ENCODE measurements at regions of chr7 and their contacts with region 1.

Region 1: GRCh38 chr7:130242198-130243014 is 24.3 kb upstream of the CPA2 start:
- H3K4me3 Mint-ChIP-seq: no peak overlapping the region
- H3K27ac Mint-ChIP-seq: no peak overlapping the region
- H3K4me1 Mint-ChIP-seq: peaks cover 13% of the 10 kb centered on the region
- H3K27me3 Mint-ChIP-seq: no peaks in the 10 kb centered on the region

Region 2: GRCh38 chr7:130263130-130263529 is 20.7 kb after region 1 on chr7:
- intact Hi-C with region 1: no loop called
- H3K4me3 Mint-ChIP-seq: no peak overlapping the region
- H3K27ac Mint-ChIP-seq: no peak overlapping the region
- H3K4me1 Mint-ChIP-seq: no peaks in the 10 kb centered on the region
- H3K27me3 Mint-ChIP-seq: peaks cover 1% of the 10 kb centered on the region

Region 3: GRCh38 chr7:130486114-130486958 is 243.9 kb after region 1 on chr7:
- intact Hi-C with region 1: loop called (anchors 5 kb)
- H3K4me3 Mint-ChIP-seq: peak overlapping the region; percentile 81
- H3K27ac Mint-ChIP-seq: peak overlapping the region; percentile 67
- H3K4me1 Mint-ChIP-seq: peaks cover 46% of the 10 kb centered on the region
- H3K27me3 Mint-ChIP-seq: peaks cover 55% of the 10 kb centered on the region

Region 4: GRCh38 chr7:130560970-130561369 is 318.6 kb after region 1 on chr7:
- intact Hi-C with region 1: loop called (anchors 5 kb)
- H3K4me3 Mint-ChIP-seq: no peak overlapping the region
- H3K27ac Mint-ChIP-seq: no peak overlapping the region
- H3K4me1 Mint-ChIP-seq: no peaks in the 10 kb centered on the region
- H3K27me3 Mint-ChIP-seq: no peaks in the 10 kb centered on the region

Region 5: DNA sequence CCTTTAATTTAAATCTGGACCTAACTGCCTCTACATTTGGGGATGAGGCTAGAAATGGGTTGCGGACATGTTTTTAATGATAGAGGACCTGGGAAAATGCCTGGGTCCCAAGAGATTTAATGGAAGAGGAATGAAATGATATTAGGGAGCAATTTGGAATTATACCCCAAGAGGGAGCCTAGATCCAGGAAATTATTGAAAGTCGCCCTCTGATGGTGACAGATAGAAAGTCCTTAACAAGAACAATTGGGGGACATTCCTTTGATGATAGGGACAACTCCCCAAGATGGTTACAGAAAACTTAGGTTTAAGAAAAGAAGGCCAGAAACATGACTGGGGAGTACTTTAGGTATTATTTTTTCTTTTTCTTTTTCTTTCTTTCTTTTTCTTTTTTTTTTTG is 453.4 kb after region 1 on chr7:
- intact Hi-C with region 1: loop called (anchors 2 kb)
- H3K4me3 Mint-ChIP-seq: no peak overlapping the region
- H3K27ac Mint-ChIP-seq: no peak overlapping the region
- H3K4me1 Mint-ChIP-seq: no peaks in the 10 kb centered on the region
- H3K27me3 Mint-ChIP-seq: no peaks in the 10 kb centered on the region

Region 6: GRCh38 chr7:130721486-130722280 is 479.3 kb after region 1 on chr7:
- intact Hi-C with region 1: loop called (anchors 1 kb)
- H3K4me3 Mint-ChIP-seq: no peak overlapping the region
- H3K27ac Mint-ChIP-seq: no peak overlapping the region
- H3K4me1 Mint-ChIP-seq: no peaks in the 10 kb centered on the region
- H3K27me3 Mint-ChIP-seq: peaks cover 26% of the 10 kb centered on the region

Region 7: GRCh38 chr7:130758429-130759056 is 516.1 kb after region 1 on chr7:
- intact Hi-C with region 1: loop called (anchors 1 kb)
- H3K4me3 Mint-ChIP-seq: no peak overlapping the region
- H3K27ac Mint-ChIP-seq: no peak overlapping the region
- H3K4me1 Mint-ChIP-seq: no peaks in the 10 kb centered on the region
- H3K27me3 Mint-ChIP-seq: peaks cover 15% of the 10 kb centered on the region

Region 8: DNA sequence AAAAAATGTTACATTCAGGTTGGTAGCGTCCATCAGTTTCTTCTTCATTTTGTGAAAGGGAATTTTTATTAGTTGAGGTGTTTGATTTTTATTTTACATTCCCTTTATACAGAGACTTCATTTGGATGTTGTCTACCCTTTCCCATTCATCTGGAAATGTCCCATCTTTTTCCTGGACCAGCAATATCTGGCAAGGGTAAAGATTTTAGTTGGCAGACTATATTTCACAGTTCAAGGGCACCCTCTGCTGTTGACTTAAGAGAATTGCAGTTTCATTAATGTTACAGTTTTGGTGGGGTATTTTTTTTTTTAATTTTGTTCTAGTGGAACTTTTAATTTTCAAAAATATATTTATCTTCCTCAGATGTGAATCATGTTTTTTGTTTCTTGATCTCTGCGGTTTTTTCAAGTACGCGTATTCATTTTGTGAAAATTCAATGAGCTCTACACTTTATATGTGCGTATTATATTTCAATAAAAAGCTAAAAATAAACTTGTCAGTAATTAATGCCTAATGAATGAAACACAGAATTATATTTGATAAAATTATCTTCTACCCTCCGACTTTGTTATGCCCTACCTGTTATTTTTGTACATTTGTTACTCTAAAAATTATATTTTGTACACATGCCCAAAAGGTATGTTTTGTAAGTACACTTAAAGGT is 589.5 kb after region 1 on chr7:
- intact Hi-C with region 1: loop called (anchors 2 kb)
- H3K4me3 Mint-ChIP-seq: no peak overlapping the region
- H3K27ac Mint-ChIP-seq: no peak overlapping the region
- H3K4me1 Mint-ChIP-seq: no peaks in the 10 kb centered on the region
- H3K27me3 Mint-ChIP-seq: peaks cover 5% of the 10 kb centered on the region